GM12878 (cell line): ENCODE measurements at regions of chr3 and their contacts with region 1.

Region 1: GRCh38 chr3:102229062-102229655 is 205.7 kb upstream of the ZPLD1 start:
- DNase-seq: peak; percentile 61
- ATAC-seq: peak; percentile 78
- H3K4me3 ChIP-seq: no peak overlapping the region
- H3K27ac ChIP-seq: no peak overlapping the region
- H3K4me1 ChIP-seq: peaks cover 6% of the 10 kb centered on the region; the same call in 1 of the 2 replicates
- H3K27me3 ChIP-seq: no peaks in the 10 kb centered on the region
- CTCF ChIP-seq: peak; percentile 89 to 93 (median 91)
- EP300 ChIP-seq: no peak
- POLR2A ChIP-seq: no peak
- RAD21 ChIP-seq: peak; percentile 98

Region 2: GRCh38 chr3:101695779-101696372 is 533.3 kb before region 1 on chr3:
- CTCF ChIA-PET with region 1: interaction called, 7 read pairs
- POLR2A ChIA-PET with region 1: no interaction called
- RAD21 ChIA-PET with region 1: interaction called, 8 read pairs
- SMC1A ChIA-PET with region 1: interaction called, 5 read pairs
- in situ Hi-C with region 1: no loop called
- intact Hi-C with region 1: loop called (anchors 2 kb)
- DNase-seq: no peak
- ATAC-seq: peak; percentile 58
- H3K4me3 ChIP-seq: no peak overlapping the region
- H3K27ac ChIP-seq: no peak overlapping the region
- H3K4me1 ChIP-seq: peaks cover 4% of the 10 kb centered on the region; the same call in 1 of the 2 replicates
- H3K27me3 ChIP-seq: no peaks in the 10 kb centered on the region
- CTCF ChIP-seq: peak; percentile 58 to 65 (median 59)
- EP300 ChIP-seq: no peak
- POLR2A ChIP-seq: no peak
- RAD21 ChIP-seq: peak; percentile 76

Region 3: GRCh38 chr3:101827211-101828174 is 401.7 kb before region 1 on chr3:
- CTCF ChIA-PET with region 1: interaction called, 32 read pairs
- POLR2A ChIA-PET with region 1: no interaction called
- RAD21 ChIA-PET with region 1: interaction called, 17 read pairs
- SMC1A ChIA-PET with region 1: interaction called, 16 read pairs
- in situ Hi-C with region 1: no loop called
- intact Hi-C with region 1: no loop called
- DNase-seq: peak; percentile 93
- ATAC-seq: peak; percentile 83
- H3K4me3 ChIP-seq: peak overlapping the region; percentile 78
- H3K27ac ChIP-seq: peak overlapping the region; percentile 92
- H3K4me1 ChIP-seq: peaks cover 11% of the 10 kb centered on the region
- H3K27me3 ChIP-seq: no peaks in the 10 kb centered on the region
- CTCF ChIP-seq: no peak
- EP300 ChIP-seq: peak; percentile 36 to 84
- POLR2A ChIP-seq: peak; percentile 92
- RAD21 ChIP-seq: peak; percentile 38; the same call in 1 of the 2 replicates

Region 4: GRCh38 chr3:101936419-101937356 is 292.5 kb before region 1 on chr3:
- CTCF ChIA-PET with region 1: interaction called, 3 read pairs
- POLR2A ChIA-PET with region 1: interaction called, 3 read pairs
- RAD21 ChIA-PET with region 1: interaction called, 15 read pairs
- SMC1A ChIA-PET with region 1: interaction called, 14 read pairs
- in situ Hi-C with region 1: no loop called
- intact Hi-C with region 1: loop called (anchors 2 kb)
- DNase-seq: peak; percentile 95
- ATAC-seq: peak; percentile 82
- H3K4me3 ChIP-seq: peak overlapping the region; percentile 44; the same call in 1 of the 2 replicates
- H3K27ac ChIP-seq: peak overlapping the region; percentile 56
- H3K4me1 ChIP-seq: peaks cover 53% of the 10 kb centered on the region
- H3K27me3 ChIP-seq: no peaks in the 10 kb centered on the region
- CTCF ChIP-seq: no peak
- EP300 ChIP-seq: peak; percentile 91 to 94
- POLR2A ChIP-seq: no peak
- RAD21 ChIP-seq: peak; percentile 17; the same call in 1 of the 2 replicates

Region 5: DNA sequence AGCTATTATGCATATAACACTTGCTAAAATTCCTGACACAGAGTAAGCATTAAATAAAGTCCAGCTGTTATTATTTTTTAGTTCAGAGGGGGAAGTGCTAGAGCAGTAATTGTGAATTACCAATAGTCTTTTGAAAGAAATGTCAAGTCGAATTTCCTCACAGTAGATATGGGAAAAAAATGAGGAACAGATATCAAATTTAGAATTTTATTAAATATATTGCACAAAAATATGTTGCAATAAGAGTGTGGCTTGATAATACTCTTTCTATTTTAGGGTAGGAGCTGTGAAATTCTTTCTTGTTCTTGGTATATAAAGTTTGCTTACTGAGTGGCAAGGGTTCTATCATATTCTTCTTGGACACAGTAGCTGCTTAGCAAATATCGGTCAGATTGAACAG is 198.5 kb before region 1 on chr3:
- CTCF ChIA-PET with region 1: interaction called, 4 read pairs
- POLR2A ChIA-PET with region 1: no interaction called
- RAD21 ChIA-PET with region 1: interaction called, 7 read pairs
- SMC1A ChIA-PET with region 1: interaction called, 15 read pairs
- in situ Hi-C with region 1: no loop called
- intact Hi-C with region 1: no loop called
- DNase-seq: no peak
- ATAC-seq: no peak
- H3K4me3 ChIP-seq: no peak overlapping the region
- H3K27ac ChIP-seq: no peak overlapping the region
- H3K4me1 ChIP-seq: peaks cover 19% of the 10 kb centered on the region; the same call in 1 of the 2 replicates
- H3K27me3 ChIP-seq: no peaks in the 10 kb centered on the region
- CTCF ChIP-seq: no peak
- EP300 ChIP-seq: no peak
- POLR2A ChIP-seq: no peak
- RAD21 ChIP-seq: no peak

Region 6: DNA sequence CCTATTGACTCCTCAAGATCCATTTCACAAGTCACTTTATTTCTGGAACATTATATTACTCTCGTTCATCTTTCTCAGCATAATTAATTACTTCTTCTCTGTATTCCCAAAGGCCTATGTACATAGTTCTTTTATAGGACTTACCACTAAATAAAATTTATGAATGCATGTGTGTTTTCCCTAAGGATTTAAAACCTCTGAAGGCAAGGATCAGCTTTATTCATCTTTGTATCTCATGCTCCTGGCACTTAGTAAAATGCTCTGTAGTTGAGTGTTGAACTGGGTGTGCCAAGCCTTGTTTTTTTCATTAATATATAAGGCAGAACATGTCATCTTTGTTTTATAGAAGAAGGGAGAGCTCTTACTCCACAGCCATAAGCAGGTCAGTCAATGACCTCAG is 11.6 kb after region 1 on chr3:
- CTCF ChIA-PET with region 1: interaction called, 76 read pairs
- POLR2A ChIA-PET with region 1: no interaction called
- RAD21 ChIA-PET with region 1: interaction called, 16 read pairs
- SMC1A ChIA-PET with region 1: interaction called, 18 read pairs
- in situ Hi-C with region 1: no loop called
- intact Hi-C with region 1: no loop called
- DNase-seq: no peak
- ATAC-seq: no peak
- H3K4me3 ChIP-seq: no peak overlapping the region
- H3K27ac ChIP-seq: no peak overlapping the region
- H3K4me1 ChIP-seq: no peaks in the 10 kb centered on the region
- H3K27me3 ChIP-seq: no peaks in the 10 kb centered on the region; a peak in 2 of 4 replicates
- CTCF ChIP-seq: no peak
- EP300 ChIP-seq: no peak
- POLR2A ChIP-seq: no peak
- RAD21 ChIP-seq: no peak

Region 7: GRCh38 chr3:102630531-102630930 is 401.4 kb after region 1 on chr3:
- CTCF ChIA-PET with region 1: no interaction called
- POLR2A ChIA-PET with region 1: no interaction called
- RAD21 ChIA-PET with region 1: no interaction called
- SMC1A ChIA-PET with region 1: no interaction called
- in situ Hi-C with region 1: no loop called
- intact Hi-C with region 1: no loop called
- DNase-seq: no peak
- ATAC-seq: no peak
- H3K4me3 ChIP-seq: no peak overlapping the region
- H3K27ac ChIP-seq: no peak overlapping the region
- H3K4me1 ChIP-seq: no peaks in the 10 kb centered on the region
- H3K27me3 ChIP-seq: no peaks in the 10 kb centered on the region
- CTCF ChIP-seq: no peak
- EP300 ChIP-seq: no peak
- POLR2A ChIP-seq: no peak
- RAD21 ChIP-seq: no peak

Region 8: DNA sequence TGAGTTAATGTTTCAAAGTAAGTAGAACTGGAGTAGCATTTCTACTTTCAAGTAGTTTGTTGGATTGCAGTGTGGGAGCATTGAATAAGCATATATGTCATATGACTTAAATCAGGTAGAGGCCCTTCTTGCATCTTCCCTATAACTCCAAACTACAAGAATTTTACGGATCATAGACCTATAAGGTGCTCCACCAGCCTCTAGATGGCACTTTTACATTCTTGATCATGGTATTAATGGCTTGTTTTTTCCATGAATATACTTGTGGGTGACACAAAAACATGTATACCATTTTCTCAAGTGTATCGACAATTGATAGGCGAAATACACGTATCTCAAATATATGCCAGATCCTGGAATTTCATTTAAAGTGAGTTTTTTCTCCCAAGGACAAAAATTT is 516.7 kb after region 1 on chr3:
- CTCF ChIA-PET with region 1: interaction called, 11 read pairs
- POLR2A ChIA-PET with region 1: no interaction called
- RAD21 ChIA-PET with region 1: interaction called, 22 read pairs
- SMC1A ChIA-PET with region 1: interaction called, 19 read pairs
- in situ Hi-C with region 1: no loop called
- intact Hi-C with region 1: no loop called
- DNase-seq: no peak
- ATAC-seq: peak; percentile 16; the same call in 1 of the 3 replicates
- H3K4me3 ChIP-seq: no peak overlapping the region
- H3K27ac ChIP-seq: no peak overlapping the region
- H3K4me1 ChIP-seq: no peaks in the 10 kb centered on the region
- H3K27me3 ChIP-seq: no peaks in the 10 kb centered on the region
- CTCF ChIP-seq: peak in 1 of 3 experiments; percentile 15; a peak in 1 of 6 replicates
- EP300 ChIP-seq: no peak
- POLR2A ChIP-seq: no peak
- RAD21 ChIP-seq: no peak